GM10248 (cell line): ENCODE measurements at regions of chr15 and their contacts with region 1.

Region 1: DNA sequence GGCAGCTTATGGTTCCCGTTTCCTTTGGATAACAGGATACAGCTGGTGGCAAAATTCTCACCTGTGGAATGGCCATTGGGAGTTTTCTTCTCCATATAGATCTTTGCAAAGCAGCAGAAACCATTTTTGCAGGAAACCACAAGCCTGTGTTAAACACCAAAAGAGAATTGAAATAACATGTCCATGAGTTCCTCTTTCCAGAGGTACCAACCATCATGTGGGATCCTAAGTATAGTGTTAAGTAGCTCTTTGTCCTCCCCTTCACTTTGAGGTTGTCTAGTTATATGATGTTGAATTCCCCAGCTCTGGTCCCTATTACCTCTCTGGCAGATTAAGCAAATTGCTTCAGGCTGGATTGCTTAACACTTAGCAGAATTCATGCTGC is 94.9 kb downstream of the AKAP13 start:
- DNase-seq: peak; percentile 31
- CTCF ChIP-seq: no peak

Region 2: DNA sequence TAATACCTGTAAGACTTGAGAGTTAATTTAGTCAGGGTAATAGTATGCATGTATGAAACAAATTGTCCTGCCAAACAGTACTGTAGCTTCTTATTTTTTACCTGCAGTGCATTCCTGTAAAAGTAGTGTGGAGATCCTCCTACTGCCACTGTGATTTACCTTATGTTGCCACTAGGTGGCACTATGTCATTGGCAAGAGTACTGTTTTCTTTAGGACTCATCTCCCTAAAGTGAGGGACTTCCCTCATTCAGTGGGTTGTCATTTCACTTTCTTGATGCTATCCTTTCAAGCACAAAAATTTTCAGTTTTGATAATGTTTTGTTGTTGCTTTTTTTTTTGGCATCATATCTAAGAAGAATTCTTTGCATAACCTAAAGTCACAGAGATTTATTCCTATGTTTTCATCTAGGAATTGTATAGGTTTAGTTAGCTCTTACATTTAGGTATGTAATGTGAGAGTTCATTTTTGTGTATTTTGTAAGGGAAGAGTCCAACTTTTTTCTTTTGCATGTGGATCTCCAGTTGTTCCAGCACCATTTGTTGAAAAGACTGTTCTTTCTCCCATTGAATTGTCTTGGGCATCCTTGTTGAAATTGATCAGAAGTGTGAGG is 10.8 kb after region 1 on chr15:
- CTCF ChIA-PET with region 1: interaction called, 73 read pairs
- POLR2A ChIA-PET with region 1: no interaction called
- DNase-seq: peak; percentile 73
- CTCF ChIP-seq: peak; percentile 57

Region 3: DNA sequence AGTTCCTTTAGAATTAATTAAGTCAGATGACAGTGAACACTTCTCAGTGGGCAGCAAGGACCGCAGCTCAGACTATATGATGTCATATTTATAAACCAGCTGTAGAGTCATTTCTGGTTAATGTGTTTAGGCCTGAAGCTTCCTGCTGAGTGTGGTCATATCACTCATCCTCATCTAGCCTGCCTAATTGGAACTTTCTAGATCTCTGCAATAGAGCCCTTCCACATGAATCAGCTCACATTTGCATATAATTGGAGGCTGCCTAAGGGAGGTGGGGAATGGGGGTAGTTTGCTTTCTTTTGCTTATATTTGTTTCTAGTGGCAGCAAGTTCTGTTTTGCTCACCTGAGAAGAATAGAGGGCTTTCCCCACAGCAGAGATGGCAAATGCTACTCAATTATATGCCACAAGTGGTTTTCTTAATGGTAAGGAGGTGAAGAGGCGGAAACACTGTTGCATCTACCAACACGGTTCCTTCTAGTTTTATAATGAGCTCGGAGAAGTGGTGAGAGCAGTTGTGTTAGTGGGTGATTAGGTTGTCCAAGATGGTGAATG is 171.3 kb after region 1 on chr15:
- CTCF ChIA-PET with region 1: no interaction called
- POLR2A ChIA-PET with region 1: no interaction called
- DNase-seq: peak; percentile 50
- CTCF ChIP-seq: no peak